Calu3 (cell line): ENCODE measurements at regions of chr2 and their contacts with region 1.

Region 1: GRCh38 chr2:45024600-45025291 is 15.5 kb upstream of the SIX2 start:
- DNase-seq: peak; percentile 78
- H3K4me3 Mint-ChIP-seq: no peak overlapping the region
- H3K27ac Mint-ChIP-seq: peak overlapping the region; percentile 50
- H3K4me1 Mint-ChIP-seq: peaks cover 10% of the 10 kb centered on the region
- H3K27me3 Mint-ChIP-seq: peaks cover 2% of the 10 kb centered on the region
- CTCF ChIP-seq: no peak

Region 2: DNA sequence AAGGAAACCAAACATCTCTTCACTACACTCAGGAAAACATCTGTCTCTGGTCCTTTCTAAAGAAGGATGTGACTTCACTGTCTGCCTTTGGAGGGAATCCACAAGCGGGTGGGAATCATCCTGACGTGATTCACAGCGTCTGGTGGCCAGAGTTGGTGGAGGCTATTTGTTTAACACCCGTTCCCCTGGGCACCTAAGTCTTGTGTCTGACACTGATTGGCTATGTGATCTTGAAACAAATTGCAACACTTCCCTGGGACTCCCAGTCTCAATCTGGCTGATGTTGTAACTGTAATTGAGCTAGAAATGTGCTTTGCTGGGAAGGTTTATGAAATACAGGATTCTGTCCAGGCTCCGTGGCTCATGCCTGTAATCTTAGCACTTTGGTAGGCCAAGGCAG is 112.1 kb before region 1 on chr2:
- CTCF ChIA-PET with region 1: no interaction called
- intact Hi-C with region 1: no loop called
- DNase-seq: no peak
- H3K4me3 Mint-ChIP-seq: no peak overlapping the region
- H3K27ac Mint-ChIP-seq: no peak overlapping the region
- H3K4me1 Mint-ChIP-seq: peaks cover 10% of the 10 kb centered on the region
- H3K27me3 Mint-ChIP-seq: no peaks in the 10 kb centered on the region
- CTCF ChIP-seq: no peak

Region 3: DNA sequence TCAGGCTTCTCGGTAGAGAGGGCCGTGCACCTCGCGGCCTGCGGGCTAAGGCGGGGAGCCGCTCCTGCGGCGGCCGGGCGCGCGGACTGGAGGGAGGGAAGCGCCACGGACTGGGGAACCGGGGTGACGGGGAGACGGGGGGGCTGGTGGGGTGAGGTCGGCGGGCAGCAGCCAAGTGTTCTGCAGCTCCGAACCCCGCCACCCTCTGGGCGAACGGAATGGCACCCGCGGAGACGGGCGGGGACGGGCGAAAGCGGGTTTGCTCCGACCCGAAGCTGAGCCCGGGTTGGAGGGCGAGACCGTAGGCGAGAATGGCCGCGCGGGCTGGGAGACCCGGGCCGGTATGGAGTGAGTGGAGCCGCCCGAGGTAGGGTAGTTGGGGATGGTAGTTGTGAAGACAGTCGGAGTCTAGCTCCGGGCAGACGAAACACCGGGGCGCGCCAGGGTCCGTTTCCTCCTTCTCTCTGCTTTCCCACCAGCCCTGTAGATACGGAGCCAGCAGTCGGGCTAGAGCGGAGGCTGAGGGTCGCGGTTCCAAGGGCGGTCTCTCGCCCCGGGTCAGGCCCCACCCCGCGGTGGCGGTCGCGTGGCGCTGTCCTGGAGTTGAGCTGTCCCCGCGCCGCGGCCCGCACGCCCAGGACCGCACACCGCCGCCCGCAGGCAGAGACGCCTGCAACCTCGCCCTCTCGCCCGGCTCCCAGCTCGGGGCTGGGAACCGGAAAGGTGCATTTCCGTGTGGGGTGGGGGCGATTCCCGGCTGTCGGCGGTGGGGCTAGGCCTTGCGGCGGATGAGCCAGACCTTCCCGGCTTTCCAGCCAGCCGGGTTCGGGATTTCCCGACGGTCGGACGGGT is 144.8 kb after region 1 on chr2:
- CTCF ChIA-PET with region 1: interaction called, 3 read pairs
- intact Hi-C with region 1: loop called (anchors 5 kb)
- DNase-seq: peak; percentile 55
- H3K4me3 Mint-ChIP-seq: peak overlapping the region; percentile 88
- H3K27ac Mint-ChIP-seq: no peak overlapping the region
- H3K4me1 Mint-ChIP-seq: no peaks in the 10 kb centered on the region
- H3K27me3 Mint-ChIP-seq: no peaks in the 10 kb centered on the region
- CTCF ChIP-seq: no peak

Region 4: DNA sequence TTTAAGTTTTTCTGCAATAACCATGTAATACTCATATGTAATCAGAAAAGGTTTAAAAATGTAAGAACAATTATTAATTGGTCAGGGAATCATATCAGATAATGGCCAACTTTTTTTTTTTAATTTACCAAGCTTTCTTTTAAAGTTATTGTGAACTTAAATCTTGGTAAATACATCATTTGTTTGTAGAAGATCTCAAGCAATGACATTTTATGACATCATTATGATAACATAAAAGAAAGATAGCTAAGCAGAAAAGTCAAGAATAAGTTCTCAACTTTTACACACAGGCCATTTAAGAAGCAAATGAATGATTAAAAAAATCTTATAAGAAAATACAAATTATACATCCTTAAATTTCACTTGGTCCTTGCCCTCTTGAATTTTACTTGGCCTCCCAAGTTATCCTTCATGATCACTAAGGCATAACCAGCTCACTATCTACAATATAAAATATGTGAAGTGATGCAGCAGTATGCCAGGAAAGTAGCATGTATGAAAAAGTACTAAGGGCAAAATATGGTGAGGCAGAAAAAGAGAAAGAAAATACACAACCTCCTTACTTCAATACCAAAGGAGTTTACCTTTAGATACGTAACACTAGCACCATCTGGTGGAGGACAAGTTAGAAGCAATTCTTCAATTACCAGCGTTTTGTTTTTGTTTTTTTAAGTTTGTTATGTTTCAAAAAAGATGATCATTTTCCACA is 469.7 kb after region 1 on chr2:
- CTCF ChIA-PET with region 1: interaction called, 7 read pairs
- intact Hi-C with region 1: loop called (anchors 2 kb)
- DNase-seq: peak; percentile 37
- H3K4me3 Mint-ChIP-seq: no peak overlapping the region
- H3K27ac Mint-ChIP-seq: no peak overlapping the region
- H3K4me1 Mint-ChIP-seq: no peaks in the 10 kb centered on the region
- H3K27me3 Mint-ChIP-seq: no peaks in the 10 kb centered on the region
- CTCF ChIP-seq: peak; percentile 66